ENCODE measurements at regions of chr7 and their contacts with region 1.

Region 1: DNA sequence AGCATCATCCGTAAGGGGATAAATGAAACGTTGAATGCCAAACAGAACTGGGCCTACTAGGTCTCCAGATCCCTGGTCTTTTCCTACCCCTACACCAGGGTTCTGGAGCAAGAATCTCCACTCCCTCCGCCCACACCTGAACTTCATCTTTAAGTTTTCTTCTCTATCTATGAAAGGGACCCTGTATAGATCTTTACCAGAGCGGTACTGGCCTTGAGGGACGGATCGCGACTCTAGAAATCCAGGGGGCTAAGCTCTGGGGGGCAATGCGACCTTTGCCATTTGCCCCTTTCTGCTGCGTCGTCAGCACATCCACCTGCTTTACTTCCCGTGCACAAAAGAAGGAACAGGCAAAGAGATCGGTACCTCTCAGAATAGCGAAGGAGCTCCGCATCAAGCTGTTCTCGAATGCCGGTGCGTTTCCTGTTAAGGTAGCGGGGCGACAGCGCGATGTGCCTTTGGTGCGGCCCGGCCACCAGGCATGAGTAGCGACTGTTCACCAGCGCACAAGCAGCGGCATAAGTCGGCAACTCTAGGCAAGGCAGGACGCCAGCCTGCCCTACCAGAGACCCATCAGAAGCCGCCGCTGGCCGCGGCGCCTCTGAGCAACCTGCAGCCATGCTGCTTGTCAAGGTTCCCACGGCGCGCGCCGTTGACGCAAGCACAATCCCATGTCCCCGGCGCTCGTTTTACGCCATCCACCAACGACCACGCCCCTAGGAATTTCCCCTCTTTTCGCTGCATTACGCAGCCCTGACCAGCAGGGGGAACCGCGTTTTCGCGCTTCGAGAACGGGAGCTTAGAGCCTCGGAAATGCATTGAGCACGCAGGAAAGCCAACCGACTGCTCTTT is at the start of gene POLR1F:
- DNase-seq: peak; percentile 84 to 97 (median 90)
- ATAC-seq: peak; percentile 93
- H3K4me3 ChIP-seq: peak within 1 kb of the TSS; percentile 75
- H3K4me3 Mint-ChIP-seq: peak within 1 kb of the TSS; percentile 96
- H3K27ac ChIP-seq: peak within 1 kb of the TSS; percentile 54 to 84
- H3K27ac Mint-ChIP-seq: peak within 1 kb of the TSS; percentile 92
- H3K4me1 ChIP-seq: peaks cover 19% of the 10 kb centered on the region
- H3K4me1 Mint-ChIP-seq: peaks cover 56% of the 10 kb centered on the region
- H3K27me3 ChIP-seq: no peaks in the 10 kb centered on the region
- H3K27me3 Mint-ChIP-seq: no peaks in the 10 kb centered on the region
- CTCF ChIP-seq: peak; percentile 90
- total RNA-seq, gene POLR1F: 31.7 to 32.2 TPM

Region 2: DNA sequence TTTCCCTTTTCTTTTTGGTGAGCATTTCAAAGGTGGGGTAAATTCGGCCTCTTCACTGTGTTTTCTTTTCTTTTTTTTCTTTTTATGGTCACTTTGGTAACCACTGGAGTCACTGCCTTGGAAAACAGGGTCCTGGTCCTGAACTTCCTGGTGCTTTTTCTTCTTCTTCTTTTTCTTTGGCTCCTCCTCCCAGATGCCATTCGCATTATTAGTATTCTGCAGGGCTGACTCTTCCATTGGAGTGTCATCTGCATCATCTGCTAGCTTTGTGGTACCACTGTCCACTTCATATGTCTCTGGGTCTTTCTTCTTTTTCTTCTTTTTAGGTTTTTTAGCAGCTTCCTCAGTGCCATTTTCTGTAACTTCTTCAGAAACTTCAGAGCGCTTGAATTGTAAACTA is 10.3 kb before region 1 on chr7:
- CTCF ChIA-PET with region 1: interaction called, 14 read pairs
- POLR2A ChIA-PET with region 1: interaction called, 13 read pairs
- intact Hi-C with region 1: no loop called
- DNase-seq: no peak
- ATAC-seq: no peak
- H3K4me3 ChIP-seq: no peak overlapping the region
- H3K4me3 Mint-ChIP-seq: no peak overlapping the region
- H3K27ac ChIP-seq: no peak overlapping the region
- H3K27ac Mint-ChIP-seq: no peak overlapping the region
- H3K4me1 ChIP-seq: no peaks in the 10 kb centered on the region
- H3K4me1 Mint-ChIP-seq: no peaks in the 10 kb centered on the region
- H3K27me3 ChIP-seq: no peaks in the 10 kb centered on the region
- H3K27me3 Mint-ChIP-seq: no peaks in the 10 kb centered on the region
- CTCF ChIP-seq: no peak

Region 3: GRCh38 chr7:20172736-20173334 is 464.2 kb after region 1 on chr7:
- CTCF ChIA-PET with region 1: no interaction called
- POLR2A ChIA-PET with region 1: no interaction called
- intact Hi-C with region 1: loop called in 1 of 2 experiments (anchors 5 kb)
- DNase-seq: peak in 4 of 14 experiments; percentile 6 to 34 (median 16)
- ATAC-seq: no peak
- H3K4me3 ChIP-seq: no peak overlapping the region
- H3K4me3 Mint-ChIP-seq: no peak overlapping the region
- H3K27ac ChIP-seq: no peak overlapping the region
- H3K27ac Mint-ChIP-seq: no peak overlapping the region
- H3K4me1 ChIP-seq: no peaks in the 10 kb centered on the region
- H3K4me1 Mint-ChIP-seq: no peaks in the 10 kb centered on the region
- H3K27me3 ChIP-seq: no peaks in the 10 kb centered on the region
- H3K27me3 Mint-ChIP-seq: no peaks in the 10 kb centered on the region
- CTCF ChIP-seq: peak; percentile 12

Measured in CD4-positive, alpha-beta T cell (primary cell).